ENCODE measurements at regions of chr2 and their contacts with region 1.

Region 1: DNA sequence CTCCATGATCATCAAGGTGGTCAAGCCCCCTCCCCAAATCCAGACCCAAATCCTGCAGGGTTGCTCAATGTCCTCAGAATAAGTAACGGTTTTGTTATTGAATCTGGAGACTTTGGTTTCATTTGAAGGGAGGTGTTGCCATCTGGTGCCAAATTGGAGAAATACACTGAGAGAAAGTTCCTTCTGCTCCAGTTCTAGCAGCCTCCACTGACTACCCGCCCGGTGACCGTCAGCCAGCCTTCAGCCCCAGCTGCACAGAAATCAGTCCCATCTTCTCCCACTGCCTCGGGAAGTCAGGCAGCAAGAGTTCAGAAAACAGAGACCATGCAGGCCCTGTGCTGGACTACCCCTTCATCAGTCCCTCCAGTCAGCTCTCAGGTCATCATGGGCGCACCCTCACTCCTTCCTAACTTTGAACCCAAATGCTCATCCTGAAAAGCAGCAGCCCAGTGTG is 38.7 kb downstream of the PKDCC start:
- DNase-seq: peak; percentile 54
- H3K4me3 Mint-ChIP-seq: no peak overlapping the region
- H3K27ac Mint-ChIP-seq: no peak overlapping the region
- H3K4me1 Mint-ChIP-seq: peaks cover 14% of the 10 kb centered on the region
- H3K27me3 Mint-ChIP-seq: peaks cover 14% of the 10 kb centered on the region

Region 2: GRCh38 chr2:41840702-41841551 is 245.6 kb before region 1 on chr2:
- CTCF ChIA-PET with region 1: interaction called, 10 read pairs
- POLR2A ChIA-PET with region 1: no interaction called
- DNase-seq: peak; percentile 97
- H3K4me3 Mint-ChIP-seq: peak overlapping the region; percentile 90
- H3K27ac Mint-ChIP-seq: peak overlapping the region; percentile 91
- H3K4me1 Mint-ChIP-seq: peaks cover 10% of the 10 kb centered on the region
- H3K27me3 Mint-ChIP-seq: peaks cover 18% of the 10 kb centered on the region

Region 3: DNA sequence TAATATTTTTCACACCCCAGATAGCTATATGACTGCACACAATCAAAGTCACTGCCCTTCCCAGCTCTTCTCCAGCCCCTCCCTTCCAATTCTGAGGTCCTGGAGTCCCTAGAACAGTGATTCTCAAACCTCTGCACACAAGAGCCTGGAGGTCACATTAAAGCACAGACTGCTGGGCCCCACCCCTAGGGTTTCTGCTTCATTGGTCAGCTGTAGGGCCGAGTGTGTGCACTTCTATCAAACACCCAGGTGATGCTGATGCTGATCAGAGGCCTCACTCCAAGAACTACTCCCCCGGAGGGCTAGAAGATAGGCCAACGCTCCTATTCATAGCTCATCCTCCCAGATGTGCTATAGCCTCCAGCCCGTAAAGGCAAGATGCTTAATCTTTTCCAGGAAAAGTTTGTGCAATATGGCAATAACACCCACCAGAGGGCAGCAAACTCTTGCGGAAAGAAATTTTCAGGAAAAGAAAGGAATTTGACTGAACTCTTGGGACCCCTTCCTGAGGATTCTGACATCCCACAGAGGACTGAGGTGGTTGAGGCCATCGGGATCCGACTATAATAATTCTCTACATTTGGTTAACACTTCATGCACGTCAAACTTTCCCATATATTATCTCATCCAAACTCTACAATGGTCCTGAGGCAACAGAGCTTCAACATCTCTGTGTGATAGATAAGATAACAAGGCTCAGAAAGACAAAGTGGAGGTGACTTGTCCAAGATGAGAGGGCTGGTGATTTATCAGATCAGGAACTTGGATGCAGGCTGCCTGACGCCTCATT is 232.9 kb before region 1 on chr2:
- CTCF ChIA-PET with region 1: interaction called, 11 read pairs
- POLR2A ChIA-PET with region 1: no interaction called
- DNase-seq: peak; percentile 21
- H3K4me3 Mint-ChIP-seq: no peak overlapping the region
- H3K27ac Mint-ChIP-seq: no peak overlapping the region
- H3K4me1 Mint-ChIP-seq: no peaks in the 10 kb centered on the region
- H3K27me3 Mint-ChIP-seq: peaks cover 9% of the 10 kb centered on the region

Region 4: GRCh38 chr2:41869542-41870264 is 216.8 kb before region 1 on chr2:
- CTCF ChIA-PET with region 1: interaction called, 33 read pairs
- POLR2A ChIA-PET with region 1: no interaction called
- DNase-seq: peak; percentile 65
- H3K4me3 Mint-ChIP-seq: no peak overlapping the region
- H3K27ac Mint-ChIP-seq: no peak overlapping the region
- H3K4me1 Mint-ChIP-seq: peaks cover 6% of the 10 kb centered on the region
- H3K27me3 Mint-ChIP-seq: peaks cover 11% of the 10 kb centered on the region

Region 5: DNA sequence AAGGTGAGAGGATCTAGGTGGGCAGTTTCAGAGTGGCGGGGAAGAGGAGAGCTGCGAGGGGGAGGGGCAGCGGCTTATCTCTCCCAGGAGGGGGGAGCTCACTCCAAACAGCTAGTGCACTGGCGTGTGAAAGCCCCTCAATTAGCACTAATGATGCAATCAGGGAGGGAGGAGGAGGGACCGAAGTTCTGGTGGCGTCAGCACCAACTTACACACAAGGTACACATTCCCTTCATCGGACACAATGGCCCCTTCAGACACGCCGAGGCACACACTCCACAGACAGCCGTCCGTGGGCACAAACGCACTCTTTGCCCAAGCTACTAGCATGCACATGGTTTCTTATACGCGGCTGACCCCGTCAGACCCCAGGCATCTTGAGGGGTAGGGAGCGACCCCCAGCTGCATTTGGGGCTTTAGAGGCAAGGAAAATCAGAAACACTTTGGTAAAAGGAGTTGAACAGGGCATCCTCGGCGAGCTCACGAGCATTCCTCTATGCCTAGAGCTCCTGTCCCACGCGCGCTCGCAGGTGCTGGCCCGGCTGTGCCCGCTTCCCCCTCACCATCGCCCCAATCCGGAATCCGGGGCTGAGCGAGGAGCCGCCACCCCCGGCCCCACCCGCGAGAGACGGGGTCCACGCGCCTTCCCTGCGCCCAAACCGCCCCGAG is 39.6 kb before region 1 on chr2:
- CTCF ChIA-PET with region 1: no interaction called
- POLR2A ChIA-PET with region 1: no interaction called
- DNase-seq: no peak
- H3K4me3 Mint-ChIP-seq: peak overlapping the region; percentile 48
- H3K27ac Mint-ChIP-seq: no peak overlapping the region
- H3K4me1 Mint-ChIP-seq: no peaks in the 10 kb centered on the region
- H3K27me3 Mint-ChIP-seq: peaks cover 68% of the 10 kb centered on the region